ENCODE measurements at regions of chr9 and their contacts with region 1.

Region 1: GRCh38 chr9:127308652-127309429 is 44.3 kb downstream of the GARNL3 start:
- DNase-seq: no peak
- H3K4me3 ChIP-seq: no peak overlapping the region
- H3K27ac ChIP-seq: peak overlapping the region; percentile 36 to 75
- H3K4me1 ChIP-seq: peaks cover 0 to 62% (median 33%) of the 10 kb centered on the region in 4 donors
- H3K27me3 ChIP-seq: no peaks in the 10 kb centered on the region
- CTCF ChIP-seq: no peak

Region 2: GRCh38 chr9:126838895-126839294 is 469.9 kb before region 1 on chr9:
- intact Hi-C with region 1: no loop called
- DNase-seq: no peak
- H3K4me3 ChIP-seq: no peak overlapping the region
- H3K27ac ChIP-seq: no peak overlapping the region
- H3K4me1 ChIP-seq: no peaks in the 10 kb centered on the region
- H3K27me3 ChIP-seq: no peaks in the 10 kb centered on the region
- CTCF ChIP-seq: no peak

Region 3: GRCh38 chr9:127244609-127245601 is 63.9 kb before region 1 on chr9:
- intact Hi-C with region 1: loop called (anchors 10 kb)
- DNase-seq: peak; percentile 98 to 99
- H3K4me3 ChIP-seq: peak overlapping the region; percentile 47 to 59
- H3K27ac ChIP-seq: peak overlapping the region; percentile 68 to 69
- H3K4me1 ChIP-seq: peaks cover 7 to 35% (median 9%) of the 10 kb centered on the region in 4 donors
- H3K27me3 ChIP-seq: no peaks in the 10 kb centered on the region
- CTCF ChIP-seq: no peak

Region 4: GRCh38 chr9:127503947-127504782 is 195.3 kb after region 1 on chr9:
- intact Hi-C with region 1: no loop called
- DNase-seq: peak; percentile 88 to 91
- H3K4me3 ChIP-seq: no peak overlapping the region
- H3K27ac ChIP-seq: peak overlapping the region; percentile 60 to 64
- H3K4me1 ChIP-seq: peaks cover 0 to 17% (median 6%) of the 10 kb centered on the region in 4 donors
- H3K27me3 ChIP-seq: no peaks in the 10 kb centered on the region
- CTCF ChIP-seq: peak; percentile 83 to 91

Measured in tibial artery (tissue), 4 donors.